Activated CD4-positive, alpha-beta memory T cell treated with anti-CD3 and anti-CD28 coated beads for 36 hours (primary cell): ENCODE measurements at regions of chr9 and their contacts with region 1.

Region 1: GRCh38 chr9:68999393-69000105 is 14.4 kb downstream of the PRKACG start:
- DNase-seq: peak; percentile 73
- H3K4me3 Mint-ChIP-seq: no peak overlapping the region
- H3K27ac Mint-ChIP-seq: no peak overlapping the region
- H3K4me1 Mint-ChIP-seq: peaks cover 9% of the 10 kb centered on the region
- H3K27me3 Mint-ChIP-seq: peaks cover 3% of the 10 kb centered on the region

Region 2: GRCh38 chr9:68584189-68585033 is 415.1 kb before region 1 on chr9:
- CTCF ChIA-PET with region 1: interaction called, 36 read pairs
- POLR2A ChIA-PET with region 1: no interaction called
- intact Hi-C with region 1: loop called (anchors 1 kb)
- DNase-seq: peak; percentile 87
- H3K4me3 Mint-ChIP-seq: no peak overlapping the region
- H3K27ac Mint-ChIP-seq: no peak overlapping the region
- H3K4me1 Mint-ChIP-seq: no peaks in the 10 kb centered on the region
- H3K27me3 Mint-ChIP-seq: peaks cover 6% of the 10 kb centered on the region

Region 3: DNA sequence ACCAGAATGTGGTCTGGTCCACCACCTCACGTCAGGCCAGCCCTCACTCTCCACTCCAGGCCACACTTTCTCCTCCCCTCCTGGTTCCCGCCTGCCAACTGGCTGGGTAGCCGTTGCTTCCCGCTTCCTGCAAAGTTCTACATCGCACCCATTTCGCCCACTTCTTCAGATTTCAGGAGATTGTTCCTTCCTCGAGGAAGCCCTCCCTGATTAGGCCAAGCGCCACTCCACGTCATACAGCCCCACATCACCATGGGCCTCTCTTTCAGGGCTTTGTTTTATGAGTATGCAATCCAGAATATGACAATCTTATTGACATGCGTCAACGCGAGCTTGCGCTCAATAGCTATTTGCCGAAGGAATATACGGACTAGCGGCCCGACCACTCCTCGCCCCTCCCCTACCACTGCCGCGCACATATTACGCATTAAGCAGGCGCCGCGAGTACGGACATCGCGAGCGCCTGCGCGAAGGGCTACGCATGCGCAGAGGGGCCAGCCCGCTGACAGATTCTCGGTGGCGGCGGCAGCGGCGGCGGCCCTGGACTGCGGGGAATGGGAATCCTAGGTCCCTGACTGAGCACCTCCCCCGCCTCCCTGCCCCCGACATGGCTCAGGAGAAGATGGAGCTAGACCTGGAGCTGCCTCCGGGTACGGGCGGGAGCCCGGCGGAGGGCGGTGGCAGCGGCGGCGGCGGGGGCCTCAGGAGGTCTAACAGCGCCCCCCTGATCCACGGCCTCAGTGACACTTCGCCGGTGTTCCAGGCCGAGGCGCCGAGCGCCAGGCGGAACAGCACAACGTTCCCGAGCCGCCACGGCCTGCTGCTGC is 219.8 kb before region 1 on chr9:
- CTCF ChIA-PET with region 1: interaction called, 4 read pairs
- POLR2A ChIA-PET with region 1: no interaction called
- intact Hi-C with region 1: loop called (anchors 5 kb)
- DNase-seq: peak; percentile 95
- H3K4me3 Mint-ChIP-seq: no peak overlapping the region
- H3K27ac Mint-ChIP-seq: no peak overlapping the region
- H3K4me1 Mint-ChIP-seq: peaks cover 5% of the 10 kb centered on the region
- H3K27me3 Mint-ChIP-seq: no peaks in the 10 kb centered on the region

Region 4: GRCh38 chr9:68974431-68974830 is 25.1 kb before region 1 on chr9:
- CTCF ChIA-PET with region 1: interaction called, 14 read pairs
- POLR2A ChIA-PET with region 1: no interaction called
- intact Hi-C with region 1: loop called (anchors 1 kb)
- DNase-seq: peak; percentile 56
- H3K4me3 Mint-ChIP-seq: no peak overlapping the region
- H3K27ac Mint-ChIP-seq: peak overlapping the region; percentile 85
- H3K4me1 Mint-ChIP-seq: peaks cover 49% of the 10 kb centered on the region
- H3K27me3 Mint-ChIP-seq: peaks cover 3% of the 10 kb centered on the region

Region 5: GRCh38 chr9:69027355-69028096 is 28.0 kb after region 1 on chr9:
- CTCF ChIA-PET with region 1: interaction called, 6 read pairs
- POLR2A ChIA-PET with region 1: no interaction called
- intact Hi-C with region 1: loop called (anchors 2 kb)
- DNase-seq: peak; percentile 39
- H3K4me3 Mint-ChIP-seq: no peak overlapping the region
- H3K27ac Mint-ChIP-seq: peak overlapping the region; percentile 40
- H3K4me1 Mint-ChIP-seq: peaks cover 32% of the 10 kb centered on the region
- H3K27me3 Mint-ChIP-seq: no peaks in the 10 kb centered on the region